ENCODE measurements at regions of chr16 and their contacts with region 1.

Region 1: DNA sequence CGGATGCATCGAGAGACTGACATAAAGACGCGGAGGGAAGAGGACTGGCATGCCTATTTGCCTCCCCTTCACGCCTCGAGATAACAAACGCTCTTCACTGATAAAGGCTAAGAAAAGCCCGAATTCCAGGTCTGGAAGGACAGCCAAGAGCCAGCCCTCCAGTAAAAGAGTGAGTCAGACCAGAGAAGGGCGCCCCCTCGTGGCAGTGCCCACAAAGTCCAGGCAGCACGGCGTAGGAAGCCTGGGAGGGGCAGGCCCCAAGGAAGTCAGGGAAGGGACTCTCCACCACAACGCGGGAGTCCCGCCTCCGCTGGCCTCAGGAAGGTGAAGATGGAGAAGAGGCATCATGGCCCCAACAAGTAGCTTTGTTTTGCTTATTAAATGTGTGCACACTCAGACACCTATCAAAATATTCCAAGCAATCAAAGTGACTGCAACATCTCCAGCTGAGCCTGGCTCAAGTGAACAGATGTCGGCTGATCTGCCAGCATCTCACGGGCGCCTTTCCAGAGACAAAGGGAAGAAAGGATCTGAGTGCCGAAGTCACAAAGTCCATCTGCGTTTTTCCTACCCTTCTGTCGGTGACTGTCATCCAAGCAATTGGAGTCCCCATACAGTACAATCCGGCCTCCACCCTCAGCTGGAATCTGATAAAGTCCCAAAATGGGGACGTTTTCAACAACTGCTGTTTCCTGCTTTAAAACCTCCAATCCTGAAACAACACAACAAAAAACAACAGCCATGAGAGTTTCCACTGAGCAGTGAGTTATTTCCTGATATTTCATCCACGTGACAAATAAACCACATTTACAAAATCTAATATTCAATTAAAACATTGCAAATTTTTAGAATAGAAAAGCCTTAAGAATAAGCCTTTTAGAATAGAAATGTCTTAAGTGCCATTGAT is 20.4 kb upstream of the SLC38A8 start:
- DNase-seq: peak; percentile 52 to 61 (median 55)
- H3K4me3 ChIP-seq: no peak overlapping the region
- H3K27ac ChIP-seq: no peak overlapping the region
- H3K4me1 ChIP-seq: no peaks in the 10 kb centered on the region
- H3K27me3 ChIP-seq: no peaks in the 10 kb centered on the region

Region 2: DNA sequence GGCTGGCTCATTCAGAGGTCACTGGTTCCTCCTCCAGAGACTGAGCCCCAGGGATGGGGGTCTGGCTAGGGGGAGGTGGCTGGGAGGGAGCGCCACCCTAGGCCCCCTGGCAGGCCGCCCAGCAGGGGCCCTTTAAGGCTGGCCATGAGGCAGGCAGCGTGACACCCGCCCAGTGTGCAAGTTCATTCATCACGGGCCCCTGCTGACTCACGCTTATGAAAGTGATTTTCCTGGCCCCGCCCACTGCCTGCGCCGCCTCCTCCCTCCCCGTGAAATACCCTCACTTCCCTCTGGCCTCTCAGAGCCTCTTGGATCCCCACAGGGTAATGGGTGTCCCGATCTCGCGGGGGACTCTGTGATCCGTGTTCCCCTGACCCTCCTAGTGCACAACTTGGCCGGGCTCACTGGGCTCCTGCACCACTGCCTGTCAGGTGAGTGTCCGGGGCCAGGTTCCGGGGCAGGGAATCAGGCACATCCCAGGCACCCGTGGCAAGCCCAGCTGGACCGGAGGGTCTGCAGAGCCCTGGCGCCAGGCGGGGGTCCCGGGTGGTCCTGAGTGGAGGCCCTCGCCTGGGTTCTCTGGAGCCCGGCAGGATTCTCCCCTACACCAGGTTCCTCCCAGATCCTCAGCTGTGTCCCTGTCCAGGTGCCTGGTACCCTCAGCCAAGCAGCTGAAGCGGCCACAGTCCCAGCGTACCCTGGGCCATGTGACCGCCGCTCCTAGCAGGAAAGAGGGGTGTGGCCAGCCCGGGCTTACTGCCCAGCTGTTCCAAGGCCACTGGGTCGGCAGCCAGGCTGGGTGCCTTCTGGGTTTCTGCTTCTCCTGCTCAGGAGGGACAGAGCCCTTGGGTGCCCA is 109.8 kb before region 1 on chr16 and contains the start of gene OSGIN1:
- CTCF ChIA-PET with region 1: interaction called, 95 read pairs
- POLR2A ChIA-PET with region 1: no interaction called
- DNase-seq: peak; percentile 85 to 95 (median 95)
- H3K4me3 ChIP-seq: peak within 1 kb of the TSS in 5 of 7 experiments; percentile 32 to 63 (median 45)
- H3K27ac ChIP-seq: peak within 1 kb of the TSS in 1 of 2 experiments; percentile 58
- H3K4me1 ChIP-seq: peaks cover 0 to 20% (median 18%) of the 10 kb centered on the region in 4 experiments
- H3K27me3 ChIP-seq: peaks cover 0 to 31% (median 5%) of the 10 kb centered on the region in 5 experiments

Region 3: GRCh38 chr16:83959656-83960434 is 103.1 kb before region 1 on chr16:
- CTCF ChIA-PET with region 1: interaction called, 95 read pairs
- POLR2A ChIA-PET with region 1: no interaction called
- DNase-seq: no peak
- H3K4me3 ChIP-seq: no peak overlapping the region
- H3K27ac ChIP-seq: no peak overlapping the region
- H3K4me1 ChIP-seq: no peaks in the 10 kb centered on the region
- H3K27me3 ChIP-seq: peaks cover 0 to 16% (median 5%) of the 10 kb centered on the region in 5 experiments

Region 4: GRCh38 chr16:84166796-84167695 is 104.1 kb after region 1 on chr16:
- CTCF ChIA-PET with region 1: no interaction called
- POLR2A ChIA-PET with region 1: no interaction called
- DNase-seq: no peak
- H3K4me3 ChIP-seq: no peak overlapping the region
- H3K27ac ChIP-seq: no peak overlapping the region
- H3K4me1 ChIP-seq: no peaks in the 10 kb centered on the region
- H3K27me3 ChIP-seq: peaks cover 4 to 41% (median 13%) of the 10 kb centered on the region in 5 experiments